CD4-positive, alpha-beta T cell (primary cell): ENCODE measurements at regions of chr16 and their contacts with region 1.

Region 1: DNA sequence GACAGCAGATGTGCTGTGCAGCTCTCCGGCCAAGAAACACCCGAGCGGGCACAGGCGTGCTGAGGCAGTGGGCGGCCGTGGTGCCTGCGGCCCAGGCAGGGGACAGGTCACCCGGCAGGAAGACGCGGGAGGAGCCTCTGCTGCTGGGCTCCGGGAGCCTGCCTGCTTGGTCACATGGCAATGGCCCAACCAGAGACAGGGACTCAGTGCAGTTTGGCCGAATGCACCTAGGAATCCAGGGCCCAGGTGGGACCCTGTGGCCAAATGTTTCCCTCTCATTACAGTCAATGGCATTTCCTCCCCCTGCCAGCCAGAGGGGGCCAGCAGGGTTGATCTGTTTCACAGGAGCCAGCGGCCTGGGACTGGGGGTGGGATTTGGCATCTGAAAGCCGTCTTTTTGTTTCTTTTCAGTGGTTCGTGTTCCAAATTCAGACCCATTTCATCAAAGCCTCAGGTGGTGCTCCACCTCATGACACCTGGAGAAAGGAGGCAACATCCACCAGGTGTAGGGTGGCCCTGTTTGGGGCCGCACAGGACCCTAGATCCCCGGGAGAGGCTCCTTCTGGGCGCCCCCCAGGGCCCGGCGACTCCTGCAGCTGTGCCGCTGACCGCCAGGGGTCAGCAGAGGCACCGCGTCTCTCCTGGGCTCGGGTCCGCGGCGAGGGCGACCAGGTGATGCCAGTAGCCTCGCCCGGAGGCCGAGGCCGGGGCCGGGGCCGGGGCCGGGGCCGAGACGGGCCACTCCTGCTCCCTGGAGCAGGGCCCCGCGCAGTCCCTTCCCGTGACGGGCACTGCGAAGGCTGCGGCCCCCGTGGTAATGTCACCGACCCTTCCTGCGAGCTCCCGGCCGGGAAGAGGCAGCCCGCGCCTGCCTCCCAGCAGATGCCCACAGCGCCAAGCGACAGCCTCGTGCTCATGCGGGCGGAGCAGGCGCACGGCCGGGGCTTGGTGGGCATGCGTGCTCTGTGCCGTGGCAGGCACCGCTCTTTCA is 118.5 kb downstream of the C16orf78 start:
- DNase-seq: peak in 12 of 14 experiments; percentile 12 to 70 (median 40)
- ATAC-seq: peak; percentile 78
- H3K4me3 ChIP-seq: no peak overlapping the region
- H3K4me3 Mint-ChIP-seq: no peak overlapping the region
- H3K27ac ChIP-seq: no peak overlapping the region
- H3K27ac Mint-ChIP-seq: no peak overlapping the region
- H3K4me1 ChIP-seq: peaks cover 8% of the 10 kb centered on the region
- H3K4me1 Mint-ChIP-seq: no peaks in the 10 kb centered on the region
- H3K27me3 ChIP-seq: no peaks in the 10 kb centered on the region
- H3K27me3 Mint-ChIP-seq: no peaks in the 10 kb centered on the region
- CTCF ChIP-seq: peak; percentile 89

Region 2: GRCh38 chr16:49463529-49463928 is 28.5 kb before region 1 on chr16:
- CTCF ChIA-PET with region 1: interaction called, 5 read pairs
- POLR2A ChIA-PET with region 1: no interaction called
- intact Hi-C with region 1: loop called in 1 of 2 experiments (anchors 2 kb)
- DNase-seq: peak; percentile 63 to 94 (median 74)
- ATAC-seq: peak; percentile 82
- H3K4me3 ChIP-seq: peak overlapping the region; percentile 13
- H3K4me3 Mint-ChIP-seq: peak overlapping the region; percentile 59
- H3K27ac ChIP-seq: peak overlapping the region; percentile 47 to 75
- H3K27ac Mint-ChIP-seq: peak overlapping the region; percentile 92
- H3K4me1 ChIP-seq: peaks cover 57% of the 10 kb centered on the region
- H3K4me1 Mint-ChIP-seq: peaks cover 67% of the 10 kb centered on the region
- H3K27me3 ChIP-seq: no peaks in the 10 kb centered on the region
- H3K27me3 Mint-ChIP-seq: no peaks in the 10 kb centered on the region
- CTCF ChIP-seq: no peak

Region 3: GRCh38 chr16:49592546-49593423 is 100.7 kb after region 1 on chr16:
- CTCF ChIA-PET with region 1: interaction called, 3 read pairs
- POLR2A ChIA-PET with region 1: no interaction called
- intact Hi-C with region 1: loop called in 1 of 2 experiments (anchors 2 kb)
- DNase-seq: peak; percentile 6 to 74 (median 26)
- ATAC-seq: peak; percentile 74
- H3K4me3 ChIP-seq: no peak overlapping the region
- H3K4me3 Mint-ChIP-seq: no peak overlapping the region
- H3K27ac ChIP-seq: no peak overlapping the region
- H3K27ac Mint-ChIP-seq: no peak overlapping the region
- H3K4me1 ChIP-seq: peaks cover 7% of the 10 kb centered on the region
- H3K4me1 Mint-ChIP-seq: peaks cover 21% of the 10 kb centered on the region
- H3K27me3 ChIP-seq: peaks cover 3 to 9% of the 10 kb centered on the region in 2 experiments
- H3K27me3 Mint-ChIP-seq: peaks cover 5% of the 10 kb centered on the region
- CTCF ChIP-seq: peak; percentile 76